HEK293 (cell line): ENCODE measurements at regions of chr2 and their contacts with region 1.

Region 1: GRCh38 chr2:178796079-178796677 is 11.0 kb downstream of the TTN start:
- H3K4me3 ChIP-seq: no peak overlapping the region
- H3K27ac ChIP-seq: no peak overlapping the region
- H3K4me1 ChIP-seq: no peaks in the 10 kb centered on the region
- CTCF ChIP-seq: peak; percentile 36; the same call in 1 of the 2 replicates

Region 2: GRCh38 chr2:178761759-178762371 is 34.3 kb before region 1 on chr2:
- CTCF ChIA-PET with region 1: interaction called, 19 read pairs
- POLR2A ChIA-PET with region 1: no interaction called
- H3K4me3 ChIP-seq: no peak overlapping the region
- H3K27ac ChIP-seq: no peak overlapping the region
- H3K4me1 ChIP-seq: no peaks in the 10 kb centered on the region
- CTCF ChIP-seq: peak; percentile 41; the same call in 1 of the 2 replicates

Region 3: DNA sequence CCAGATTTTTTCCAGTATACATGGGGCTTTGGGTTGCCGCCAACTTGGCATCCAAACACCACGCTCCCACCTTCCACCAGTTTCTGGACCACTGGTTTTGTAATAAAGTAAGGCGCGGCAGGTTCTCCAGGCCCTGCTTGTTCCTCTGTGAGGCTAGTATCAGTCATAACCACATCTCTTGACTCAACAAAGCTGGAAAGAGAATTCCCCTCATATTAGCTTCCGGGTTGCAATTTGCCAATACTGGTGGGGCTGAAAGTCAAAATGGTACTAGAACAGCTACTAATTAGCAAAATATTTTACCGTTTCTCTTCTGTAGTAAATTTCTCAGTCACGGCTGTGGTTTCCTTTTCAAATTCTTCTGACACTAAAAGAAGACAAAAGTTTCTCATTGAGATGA is 13.9 kb before region 1 on chr2:
- CTCF ChIA-PET with region 1: interaction called, 14 read pairs
- POLR2A ChIA-PET with region 1: no interaction called
- H3K4me3 ChIP-seq: no peak overlapping the region
- H3K27ac ChIP-seq: no peak overlapping the region
- H3K4me1 ChIP-seq: no peaks in the 10 kb centered on the region
- CTCF ChIP-seq: no peak

Region 4: GRCh38 chr2:178844269-178844668 is 48.1 kb after region 1 on chr2:
- CTCF ChIA-PET with region 1: no interaction called
- POLR2A ChIA-PET with region 1: no interaction called
- H3K4me3 ChIP-seq: no peak overlapping the region
- H3K27ac ChIP-seq: no peak overlapping the region
- H3K4me1 ChIP-seq: no peaks in the 10 kb centered on the region
- CTCF ChIP-seq: no peak

Region 5: GRCh38 chr2:178882666-178883440 is 86.7 kb after region 1 on chr2:
- CTCF ChIA-PET with region 1: no interaction called
- POLR2A ChIA-PET with region 1: no interaction called
- H3K4me3 ChIP-seq: no peak overlapping the region
- H3K27ac ChIP-seq: no peak overlapping the region
- H3K4me1 ChIP-seq: no peaks in the 10 kb centered on the region
- CTCF ChIP-seq: no peak

Region 6: GRCh38 chr2:178914259-178914849 is 118.2 kb after region 1 on chr2:
- CTCF ChIA-PET with region 1: interaction called, 19 read pairs
- POLR2A ChIA-PET with region 1: no interaction called
- H3K4me3 ChIP-seq: no peak overlapping the region
- H3K27ac ChIP-seq: no peak overlapping the region
- H3K4me1 ChIP-seq: no peaks in the 10 kb centered on the region
- CTCF ChIP-seq: peak; percentile 27

Region 7: GRCh38 chr2:179129574-179130238 is 333.5 kb after region 1 on chr2:
- CTCF ChIA-PET with region 1: interaction called, 18 read pairs
- POLR2A ChIA-PET with region 1: no interaction called
- H3K4me3 ChIP-seq: no peak overlapping the region
- H3K27ac ChIP-seq: no peak overlapping the region
- H3K4me1 ChIP-seq: no peaks in the 10 kb centered on the region
- CTCF ChIP-seq: peak; percentile 29